Dendritic cell treated with granulocyte-macrophage colony-stimulating factor and Interleukin-4, amounts not matched to agents 40 ng/mL and 50 ng/mL, for 4 days (primary cell): ENCODE measurements at regions of chr21 and their contacts with region 1.

Region 1: DNA sequence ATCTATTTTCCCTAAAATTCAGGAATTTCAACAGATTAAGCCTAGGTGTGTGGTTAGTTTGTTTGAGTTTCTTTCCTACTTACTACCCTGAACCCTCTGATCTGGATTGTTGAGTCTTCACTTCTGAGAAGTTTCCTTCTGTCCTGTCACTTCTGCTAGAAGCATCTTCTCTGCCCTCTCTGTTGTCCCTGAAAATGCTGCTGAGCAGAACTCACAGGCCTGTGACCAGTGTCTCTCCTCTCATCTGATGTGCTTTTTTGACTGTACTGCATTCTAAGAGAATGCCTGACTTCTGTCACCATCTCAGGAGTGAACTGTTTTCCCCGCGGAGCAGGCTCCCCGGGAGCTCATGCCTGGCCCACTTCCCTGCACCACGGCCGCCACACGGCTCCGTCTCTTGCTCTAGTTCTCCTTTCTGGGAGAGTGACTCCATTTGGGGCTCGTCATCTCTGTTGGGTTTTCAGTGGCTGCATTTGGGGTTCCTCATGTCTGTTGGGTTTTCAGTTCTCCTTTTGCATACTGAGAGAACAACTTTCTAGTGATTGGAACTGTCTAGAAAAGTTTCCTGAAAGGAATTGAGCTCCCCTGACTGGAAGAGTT is 77.9 kb downstream of the POFUT2 start:
- H3K4me3 Mint-ChIP-seq: peak overlapping the region; percentile 52
- H3K27ac Mint-ChIP-seq: peak overlapping the region; percentile 77
- H3K4me1 Mint-ChIP-seq: peaks cover 34% of the 10 kb centered on the region
- H3K27me3 Mint-ChIP-seq: peaks cover 53% of the 10 kb centered on the region

Region 2: GRCh38 chr21:45152265-45152746 is 57.5 kb before region 1 on chr21:
- intact Hi-C with region 1: loop called (anchors 10 kb)
- H3K4me3 Mint-ChIP-seq: peak overlapping the region; percentile 74
- H3K27ac Mint-ChIP-seq: peak overlapping the region; percentile 83
- H3K4me1 Mint-ChIP-seq: peaks cover 25% of the 10 kb centered on the region
- H3K27me3 Mint-ChIP-seq: peaks cover 6% of the 10 kb centered on the region